OCI-LY7 (cell line): ENCODE measurements at regions of chr17 and their contacts with region 1.

Region 1: DNA sequence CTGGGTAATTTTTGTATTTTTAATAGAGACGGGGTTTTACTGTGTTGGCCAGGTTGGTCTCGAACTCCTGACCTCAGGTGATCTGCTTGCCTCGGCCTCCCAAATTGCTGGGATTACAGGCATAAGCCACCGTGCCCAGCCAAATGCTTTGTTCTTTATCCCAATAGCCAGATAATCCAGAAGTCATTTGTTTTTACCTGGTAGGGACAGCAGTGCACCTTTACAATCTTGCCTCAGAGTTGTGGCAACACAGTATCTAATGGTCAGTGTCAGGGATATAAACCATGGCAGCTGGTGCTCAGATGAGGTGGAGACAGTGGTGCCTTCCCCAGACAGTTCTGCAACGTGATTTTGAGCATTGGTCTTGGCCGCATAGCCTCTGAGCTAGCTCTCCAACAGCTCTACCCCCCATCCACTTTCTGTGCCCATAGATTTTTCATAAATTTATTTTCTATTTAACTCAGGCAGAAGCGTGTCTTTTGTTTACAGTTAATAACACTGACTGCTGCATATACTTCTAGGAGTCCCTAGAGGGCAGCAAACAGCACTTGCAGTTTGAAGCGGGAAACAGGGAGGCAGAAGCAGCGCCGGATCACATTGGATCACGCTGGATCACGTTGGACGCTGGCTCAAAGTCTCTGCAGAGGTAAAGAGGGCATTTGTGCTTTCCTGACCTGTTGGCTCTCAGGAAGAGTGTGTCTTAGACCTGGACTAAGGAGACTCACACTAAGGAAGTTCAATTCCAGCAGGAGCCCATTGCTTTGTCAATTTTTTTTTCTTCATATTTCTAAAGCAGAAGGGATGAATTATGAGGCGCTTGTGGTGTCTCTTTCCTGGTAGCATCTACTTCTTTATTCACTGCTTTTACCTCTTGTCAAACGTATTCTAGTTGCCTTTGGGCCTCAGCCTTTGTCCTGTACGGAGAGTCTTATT is 5.1 kb upstream of the GGT6 start:
- DNase-seq: peak; percentile 88
- H3K4me3 ChIP-seq: peak overlapping the region; percentile 42
- H3K27ac ChIP-seq: no peak overlapping the region
- H3K4me1 ChIP-seq: peaks cover 32% of the 10 kb centered on the region
- CTCF ChIP-seq: peak; percentile 98

Region 2: DNA sequence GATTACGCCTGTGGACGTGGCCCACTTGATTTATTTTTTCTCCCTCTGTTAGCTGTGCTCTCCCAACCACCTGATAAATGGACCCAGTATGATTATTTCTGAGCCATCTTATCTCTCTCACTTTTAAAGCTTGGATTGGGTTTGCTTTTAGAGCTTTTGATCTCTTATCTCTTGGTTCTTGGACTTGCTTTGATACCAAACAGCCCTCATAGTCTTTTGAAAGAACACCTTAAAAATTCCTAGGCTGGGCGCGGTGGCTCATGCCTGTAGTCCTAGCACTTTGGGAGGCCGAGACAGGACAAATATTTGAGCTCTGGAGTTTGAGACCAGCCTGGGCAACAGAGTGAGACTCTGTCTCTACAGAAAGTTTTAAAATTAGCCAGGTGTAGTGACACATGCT is 44.7 kb after region 1 on chr17:
- CTCF ChIA-PET with region 1: no interaction called
- POLR2A ChIA-PET with region 1: no interaction called
- intact Hi-C with region 1: no loop called
- DNase-seq: no peak
- H3K4me3 ChIP-seq: no peak overlapping the region
- H3K27ac ChIP-seq: no peak overlapping the region
- H3K4me1 ChIP-seq: no peaks in the 10 kb centered on the region
- CTCF ChIP-seq: no peak

Region 3: DNA sequence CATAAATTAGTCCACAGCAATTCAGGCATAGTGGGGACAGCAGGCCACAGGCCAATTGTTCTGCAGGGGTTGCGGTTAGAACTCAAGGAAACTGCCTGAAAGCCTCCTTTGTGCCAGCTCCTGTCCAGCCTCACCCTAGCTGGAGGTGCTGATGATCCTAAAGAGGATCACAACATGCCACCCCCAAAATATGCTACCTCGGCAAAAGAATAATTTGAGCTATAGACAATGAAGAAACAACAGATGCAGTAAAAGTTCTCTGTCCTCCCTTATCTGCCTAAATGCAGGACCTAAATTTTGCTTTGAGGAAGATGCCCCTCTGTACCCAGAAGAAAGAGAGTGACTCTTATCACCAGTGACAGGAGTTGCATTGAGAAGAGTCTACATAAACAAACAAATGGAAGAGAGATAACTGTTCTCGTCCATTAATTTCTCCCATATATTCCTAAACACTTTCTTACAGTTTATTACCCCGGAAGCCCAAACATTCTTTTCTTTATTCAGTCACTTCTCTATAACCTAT is 61.3 kb after region 1 on chr17:
- CTCF ChIA-PET with region 1: interaction called, 8 read pairs
- POLR2A ChIA-PET with region 1: interaction called, 4 read pairs
- intact Hi-C with region 1: loop called (anchors 1 kb)
- DNase-seq: no peak
- H3K4me3 ChIP-seq: no peak overlapping the region
- H3K27ac ChIP-seq: no peak overlapping the region
- H3K4me1 ChIP-seq: no peaks in the 10 kb centered on the region
- CTCF ChIP-seq: no peak

Region 4: DNA sequence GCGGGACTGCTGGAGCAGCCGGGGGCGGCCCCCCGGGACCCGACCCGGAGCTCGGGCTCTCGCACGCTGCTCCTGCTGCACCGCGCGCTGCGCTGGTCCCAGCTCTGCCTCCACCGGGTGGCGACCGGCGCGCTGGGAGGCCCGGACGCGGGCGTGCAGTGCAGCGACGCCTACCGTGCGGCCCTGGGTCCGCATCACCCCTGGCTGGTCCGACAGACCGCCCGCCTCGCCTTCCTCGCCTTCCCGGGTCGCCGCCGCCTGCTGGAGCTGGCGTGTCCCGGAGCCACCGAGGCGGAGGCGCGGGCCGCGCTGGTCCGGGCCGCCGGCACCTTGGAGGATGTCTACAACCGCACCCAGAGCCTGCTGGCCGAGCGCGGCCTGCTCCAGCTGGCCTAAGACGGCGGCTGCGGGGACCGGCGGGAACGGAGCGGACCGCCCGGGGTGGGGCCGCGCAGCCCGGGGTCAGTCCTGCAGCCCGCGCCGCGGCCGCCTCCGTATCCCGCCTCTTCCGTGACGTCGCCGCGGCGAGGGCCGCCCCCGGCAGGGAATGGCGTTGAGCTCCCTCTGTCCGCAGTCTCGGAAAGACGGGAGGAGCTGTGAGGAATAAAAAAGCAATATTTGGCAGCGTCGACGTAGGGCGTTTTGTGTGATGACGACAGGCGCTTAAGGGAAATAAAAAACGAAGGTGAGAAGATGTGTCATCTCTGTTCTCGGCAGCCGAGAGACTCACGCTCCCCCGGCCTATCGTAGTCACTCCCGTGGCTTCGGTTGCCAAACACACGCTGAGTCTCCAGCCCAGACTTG is 224.6 kb after region 1 on chr17:
- CTCF ChIA-PET with region 1: no interaction called
- POLR2A ChIA-PET with region 1: no interaction called
- intact Hi-C with region 1: loop called (anchors 1 kb)
- DNase-seq: peak; percentile 90
- H3K4me3 ChIP-seq: peak overlapping the region; percentile 68
- H3K27ac ChIP-seq: peak overlapping the region; percentile 14
- H3K4me1 ChIP-seq: peaks cover 13% of the 10 kb centered on the region
- CTCF ChIP-seq: peak; percentile 81

Region 5: GRCh38 chr17:4891411-4892342 is 326.2 kb after region 1 on chr17:
- CTCF ChIA-PET with region 1: no interaction called
- POLR2A ChIA-PET with region 1: interaction called, 7 read pairs
- intact Hi-C with region 1: loop called (anchors 5 kb)
- DNase-seq: no peak
- H3K4me3 ChIP-seq: no peak overlapping the region
- H3K27ac ChIP-seq: no peak overlapping the region
- H3K4me1 ChIP-seq: no peaks in the 10 kb centered on the region
- CTCF ChIP-seq: no peak

Region 6: GRCh38 chr17:4903051-4903818 is 337.8 kb after region 1 on chr17 and contains the start of gene CHRNE:
- CTCF ChIA-PET with region 1: no interaction called
- POLR2A ChIA-PET with region 1: no interaction called
- intact Hi-C with region 1: loop called (anchors 5 kb)
- DNase-seq: peak; percentile 85
- H3K4me3 ChIP-seq: no peak within 1 kb of the TSS
- H3K27ac ChIP-seq: no peak within 1 kb of the TSS
- H3K4me1 ChIP-seq: peaks cover 9% of the 10 kb centered on the region
- CTCF ChIP-seq: peak; percentile 83
- total RNA-seq, gene CHRNE: 0.32 and 0.59 TPM in 2 replicates